Mammary epithelial cell (primary cell): ENCODE measurements at regions of chr1 and their contacts with region 1.

Region 1: DNA sequence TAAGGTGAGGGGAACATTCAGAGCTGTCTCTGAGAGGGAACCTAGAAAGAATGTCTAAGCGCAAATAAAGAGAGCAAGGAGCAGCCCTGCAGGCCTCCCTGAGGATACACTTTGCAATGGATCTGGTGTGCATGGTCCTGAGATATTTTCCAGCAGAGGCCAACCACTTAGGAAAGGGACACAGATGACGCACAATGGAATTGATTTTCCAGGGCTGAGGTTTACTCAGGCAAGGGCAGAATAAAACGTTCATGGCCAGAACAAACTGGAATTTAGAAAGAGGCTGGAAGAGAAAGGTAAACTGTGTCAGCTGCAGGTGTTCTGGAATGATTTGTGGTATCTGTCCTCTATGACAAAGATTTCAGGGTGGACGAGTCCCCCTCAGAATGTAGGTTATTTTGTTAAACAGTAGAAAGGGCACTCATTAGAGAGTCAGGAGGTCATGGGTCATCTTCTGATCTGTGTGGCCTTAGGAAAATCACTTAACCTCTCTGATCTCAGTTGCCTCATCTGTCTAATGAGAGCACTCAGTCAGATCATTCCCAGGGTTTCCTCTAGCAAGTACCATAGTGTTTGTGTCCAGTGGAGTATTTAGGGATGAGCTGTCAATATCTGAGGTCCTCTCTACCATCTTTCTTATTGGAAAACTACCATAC is 61.8 kb upstream of the PGBD5 start:
- DNase-seq: no peak
- H3K4me3 ChIP-seq: no peak overlapping the region
- H3K27ac ChIP-seq: no peak overlapping the region
- H3K4me1 ChIP-seq: no peaks in the 10 kb centered on the region
- H3K27me3 ChIP-seq: peaks cover 23% of the 10 kb centered on the region
- CTCF ChIP-seq: no peak

Region 2: GRCh38 chr1:230563591-230563990 is 75.7 kb after region 1 on chr1:
- CTCF ChIA-PET with region 1: no interaction called
- dilution Hi-C with region 1: loop called (anchors 5 kb)
- in situ Hi-C with region 1: no loop called
- intact Hi-C with region 1: no loop called
- DNase-seq: no peak
- H3K4me3 ChIP-seq: no peak overlapping the region
- H3K27ac ChIP-seq: no peak overlapping the region
- H3K4me1 ChIP-seq: peaks cover 3% of the 10 kb centered on the region
- H3K27me3 ChIP-seq: peaks cover 21% of the 10 kb centered on the region
- CTCF ChIP-seq: no peak

Region 3: DNA sequence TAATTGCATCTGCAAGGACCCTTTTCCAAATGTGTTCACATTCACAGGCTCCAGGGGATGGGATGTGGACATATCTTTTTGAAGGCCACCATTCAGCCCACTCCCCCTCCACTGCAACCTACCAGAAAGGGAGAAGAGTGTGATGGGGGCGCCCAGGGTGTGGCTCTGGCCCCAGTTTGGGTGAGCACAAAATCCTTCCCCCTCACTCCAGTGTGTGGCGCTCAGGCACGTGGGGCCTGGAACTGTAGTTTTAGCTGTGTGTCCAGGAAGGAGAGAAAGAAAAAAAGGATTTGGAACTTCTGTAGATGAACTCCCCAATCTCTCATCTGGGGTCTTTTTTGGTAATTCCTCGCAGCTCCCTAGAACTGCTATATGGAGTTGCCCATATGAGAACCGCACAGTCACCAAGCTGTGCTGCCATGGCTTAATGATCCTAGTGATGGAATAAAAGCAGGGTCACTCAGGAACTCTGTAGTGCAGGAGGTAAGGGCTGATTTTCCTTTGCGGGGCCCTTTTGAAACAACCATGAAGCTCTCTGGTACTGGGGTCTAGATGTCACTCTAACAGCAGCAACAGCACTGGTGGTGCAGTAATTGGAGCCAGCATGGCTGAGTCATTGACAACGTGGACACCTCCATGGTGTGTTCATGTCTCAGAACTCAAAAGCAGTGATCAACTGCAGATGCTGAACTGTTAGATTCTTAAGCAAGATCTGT is 209.0 kb after region 1 on chr1:
- CTCF ChIA-PET with region 1: no interaction called
- dilution Hi-C with region 1: no loop called
- in situ Hi-C with region 1: no loop called
- intact Hi-C with region 1: no loop called
- DNase-seq: no peak
- H3K4me3 ChIP-seq: no peak overlapping the region
- H3K27ac ChIP-seq: no peak overlapping the region
- H3K4me1 ChIP-seq: no peaks in the 10 kb centered on the region
- H3K27me3 ChIP-seq: no peaks in the 10 kb centered on the region
- CTCF ChIP-seq: no peak